Aorta (tissue), 5 donors: ENCODE measurements at regions of chr10 and their contacts with region 1.

Region 1: GRCh38 chr10:119370111-119370741 is 162.9 kb downstream of the GRK5 start:
- DNase-seq: peak in 1 of 2 donors; percentile 79
- ATAC-seq: peak; percentile 66
- H3K4me3 ChIP-seq: no peak overlapping the region
- H3K27ac ChIP-seq: peak overlapping the region in 1 of 2 donors; percentile 49
- H3K4me1 ChIP-seq: peaks cover 0 to 2% of the 10 kb centered on the region in 2 donors
- H3K27me3 ChIP-seq: no peaks in the 10 kb centered on the region

Region 2: DNA sequence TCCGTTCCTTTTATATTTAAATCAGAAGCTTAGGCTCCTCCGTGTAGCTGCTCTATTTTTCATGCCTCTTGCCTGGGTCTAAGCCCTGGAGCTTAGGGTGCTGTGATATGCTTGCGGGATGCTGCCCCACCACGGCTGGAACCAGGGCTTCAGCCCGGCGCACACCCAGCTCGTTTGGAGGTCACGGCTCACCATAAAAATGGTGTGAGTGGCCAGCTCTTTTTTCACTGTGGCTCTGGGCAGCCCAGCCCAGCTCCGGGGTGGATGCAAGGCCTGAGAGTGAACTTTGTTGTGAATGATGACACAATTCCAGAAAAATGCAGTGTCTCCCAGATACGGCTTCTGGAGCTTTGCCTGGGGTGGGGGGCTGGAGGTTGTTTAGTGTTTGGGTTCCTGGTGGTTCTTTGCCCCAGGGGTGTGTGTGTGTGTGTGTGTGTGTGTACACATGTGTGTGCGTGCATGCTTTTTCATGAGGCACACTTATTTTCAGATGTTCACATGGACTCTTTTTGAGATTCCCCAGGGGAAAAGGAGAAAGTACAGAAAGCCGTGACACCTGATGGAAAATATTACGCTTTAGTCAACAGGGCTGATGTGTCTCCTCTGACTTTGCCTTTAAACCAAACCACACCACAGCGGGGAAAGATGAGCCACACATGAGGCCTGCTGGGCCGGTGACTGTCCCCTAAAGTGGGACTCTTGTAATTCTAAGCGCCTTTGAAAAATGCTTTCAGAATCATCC is 116.6 kb before region 1 on chr10:
- intact Hi-C with region 1: loop called in 1 of 2 experiments (anchors 5 kb)
- DNase-seq: peak; percentile 85 to 89
- ATAC-seq: peak; percentile 86
- H3K4me3 ChIP-seq: no peak overlapping the region
- H3K27ac ChIP-seq: peak overlapping the region; percentile 57 to 94
- H3K4me1 ChIP-seq: peaks cover 3% of the 10 kb centered on the region in 2 donors
- H3K27me3 ChIP-seq: no peaks in the 10 kb centered on the region

Region 3: GRCh38 chr10:119270762-119271366 is 99.4 kb before region 1 on chr10:
- intact Hi-C with region 1: no loop called
- DNase-seq: peak; percentile 86 to 92
- ATAC-seq: peak; percentile 83
- H3K4me3 ChIP-seq: no peak overlapping the region
- H3K27ac ChIP-seq: peak overlapping the region; percentile 0 to 73
- H3K4me1 ChIP-seq: no peaks in the 10 kb centered on the region
- H3K27me3 ChIP-seq: no peaks in the 10 kb centered on the region

Region 4: DNA sequence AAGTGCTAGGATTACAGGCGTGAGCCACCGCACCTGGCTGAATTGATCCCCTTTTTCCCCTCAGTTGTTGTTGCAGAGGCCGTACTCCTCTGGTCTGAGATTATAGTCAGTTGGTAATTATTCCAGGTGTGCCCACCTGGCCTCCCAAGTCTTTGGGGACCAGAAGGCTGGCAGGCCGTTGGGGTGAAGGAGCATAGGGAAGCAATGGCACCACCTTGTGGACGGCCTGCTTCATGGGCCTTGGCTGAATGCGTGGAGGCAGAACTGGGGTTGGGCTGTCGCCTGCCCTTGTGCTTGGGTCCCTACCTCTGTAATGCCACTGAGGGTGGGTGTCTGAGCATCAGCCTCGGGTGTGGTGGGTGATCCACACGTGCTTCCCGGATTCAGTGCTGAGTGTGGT is 46.6 kb after region 1 on chr10:
- intact Hi-C with region 1: loop called in 1 of 2 experiments (anchors 2 kb)
- DNase-seq: peak; percentile 78 to 86
- ATAC-seq: no peak
- H3K4me3 ChIP-seq: no peak overlapping the region
- H3K27ac ChIP-seq: no peak overlapping the region
- H3K4me1 ChIP-seq: peaks cover 0 to 2% of the 10 kb centered on the region in 2 donors
- H3K27me3 ChIP-seq: no peaks in the 10 kb centered on the region